Activated CD8-positive, alpha-beta memory T cell treated with anti-CD3 and anti-CD28 coated beads, Interleukin-2, amount 10 ng/mL, durations not matched to agents 7 days and 5 days (primary cell): ENCODE measurements at regions of chr19 and their contacts with region 1.

Region 1: GRCh38 chr19:55605207-55605636 is 225 bp upstream of the ZNF865 start:
- DNase-seq: peak; percentile 99
- ATAC-seq: peak; percentile 86
- H3K4me3 Mint-ChIP-seq: peak overlapping the region; percentile 81
- H3K27ac Mint-ChIP-seq: peak overlapping the region; percentile 92
- H3K4me1 Mint-ChIP-seq: peaks cover 50% of the 10 kb centered on the region
- H3K27me3 Mint-ChIP-seq: no peaks in the 10 kb centered on the region

Region 2: GRCh38 chr19:55467236-55468053 is 137.8 kb before region 1 on chr19:
- CTCF ChIA-PET with region 1: interaction called, 14 read pairs
- DNase-seq: peak; percentile 74
- ATAC-seq: peak; percentile 96
- H3K4me3 Mint-ChIP-seq: no peak overlapping the region
- H3K27ac Mint-ChIP-seq: no peak overlapping the region
- H3K4me1 Mint-ChIP-seq: peaks cover 3% of the 10 kb centered on the region
- H3K27me3 Mint-ChIP-seq: peaks cover 2% of the 10 kb centered on the region

Region 3: GRCh38 chr19:55516878-55517620 is 88.2 kb before region 1 on chr19:
- CTCF ChIA-PET with region 1: interaction called, 25 read pairs
- DNase-seq: peak; percentile 92
- ATAC-seq: peak; percentile 100
- H3K4me3 Mint-ChIP-seq: peak overlapping the region; percentile 54
- H3K27ac Mint-ChIP-seq: peak overlapping the region; percentile 71
- H3K4me1 Mint-ChIP-seq: peaks cover 3% of the 10 kb centered on the region
- H3K27me3 Mint-ChIP-seq: peaks cover 6% of the 10 kb centered on the region

Region 4: DNA sequence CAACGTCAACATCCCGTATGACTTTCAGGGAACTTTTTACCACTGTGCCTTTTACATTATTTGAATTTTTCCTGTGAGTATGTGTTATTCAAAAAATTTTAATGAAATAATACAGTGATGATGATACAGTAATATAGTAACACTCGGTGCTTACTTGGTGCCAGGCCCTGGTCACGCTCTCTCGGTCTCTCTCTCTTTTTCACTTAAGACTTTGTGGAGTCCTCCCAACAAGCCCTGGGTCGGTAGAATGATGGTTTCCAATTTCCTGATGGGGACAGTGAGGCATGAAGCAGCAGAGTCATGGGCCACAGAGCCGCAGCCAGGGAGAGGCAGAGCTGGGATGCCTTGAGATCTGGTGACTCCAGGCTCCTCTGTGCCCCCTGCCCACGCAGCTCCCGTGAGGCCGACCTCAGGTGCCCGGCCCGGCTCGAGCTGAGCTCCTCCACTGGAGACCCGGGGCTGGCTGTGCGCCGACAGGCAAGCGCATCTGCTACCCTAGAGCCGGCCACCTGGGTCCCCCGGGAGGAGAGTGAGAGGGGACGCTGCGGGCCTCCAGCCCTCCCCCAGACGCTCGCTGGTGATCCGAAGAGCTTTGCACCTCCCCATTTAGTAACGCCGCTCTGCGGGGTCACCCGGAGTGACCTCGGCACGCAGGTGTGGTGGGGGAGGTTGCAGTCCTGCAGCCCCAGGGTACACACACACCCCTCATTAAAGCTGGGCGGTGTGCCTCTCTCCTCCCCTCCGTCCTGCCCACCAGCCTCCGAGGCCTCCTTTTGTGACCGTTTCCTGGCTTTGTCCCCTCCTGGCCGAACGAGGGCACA is 55.5 kb before region 1 on chr19:
- CTCF ChIA-PET with region 1: no interaction called
- DNase-seq: no peak
- ATAC-seq: no peak
- H3K4me3 Mint-ChIP-seq: no peak overlapping the region
- H3K27ac Mint-ChIP-seq: no peak overlapping the region
- H3K4me1 Mint-ChIP-seq: peaks cover 2% of the 10 kb centered on the region
- H3K27me3 Mint-ChIP-seq: peaks cover 18% of the 10 kb centered on the region